CD8-positive, alpha-beta T cell (primary cell): ENCODE measurements at regions of chr21 and their contacts with region 1.

Region 1: GRCh38 chr21:44817506-44817880 is 369 bp downstream of the SUMO3 start:
- DNase-seq: peak; percentile 85 to 96 (median 91)
- ATAC-seq: peak; percentile 92
- H3K4me3 ChIP-seq: peak overlapping the region; percentile 46 to 58
- H3K4me3 Mint-ChIP-seq: peak overlapping the region; percentile 69
- H3K27ac ChIP-seq: peak overlapping the region in 1 of 2 experiments; percentile 76
- H3K27ac Mint-ChIP-seq: no peak overlapping the region
- H3K4me1 ChIP-seq: peaks cover 18% of the 10 kb centered on the region
- H3K4me1 Mint-ChIP-seq: peaks cover 9% of the 10 kb centered on the region
- H3K27me3 ChIP-seq: no peaks in the 10 kb centered on the region
- H3K27me3 Mint-ChIP-seq: no peaks in the 10 kb centered on the region
- CTCF ChIP-seq: no peak

Region 2: GRCh38 chr21:44011980-44012527 is 805.4 kb before region 1 on chr21 and contains the start of gene TRAPPC10:
- CTCF ChIA-PET with region 1: no interaction called
- POLR2A ChIA-PET with region 1: no interaction called
- intact Hi-C with region 1: loop called in 1 of 2 experiments (anchors 5 kb)
- DNase-seq: peak; percentile 48 to 91 (median 75)
- ATAC-seq: peak; percentile 53
- H3K4me3 ChIP-seq: peak within 1 kb of the TSS; percentile 63 to 79
- H3K4me3 Mint-ChIP-seq: peak within 1 kb of the TSS; percentile 87
- H3K27ac ChIP-seq: peak within 1 kb of the TSS; percentile 58 to 83
- H3K27ac Mint-ChIP-seq: peak within 1 kb of the TSS; percentile 94
- H3K4me1 ChIP-seq: peaks cover 40% of the 10 kb centered on the region
- H3K4me1 Mint-ChIP-seq: peaks cover 42% of the 10 kb centered on the region
- H3K27me3 ChIP-seq: no peaks in the 10 kb centered on the region
- H3K27me3 Mint-ChIP-seq: no peaks in the 10 kb centered on the region
- CTCF ChIP-seq: no peak
- total RNA-seq, gene TRAPPC10: 128 to 130 TPM

Region 3: DNA sequence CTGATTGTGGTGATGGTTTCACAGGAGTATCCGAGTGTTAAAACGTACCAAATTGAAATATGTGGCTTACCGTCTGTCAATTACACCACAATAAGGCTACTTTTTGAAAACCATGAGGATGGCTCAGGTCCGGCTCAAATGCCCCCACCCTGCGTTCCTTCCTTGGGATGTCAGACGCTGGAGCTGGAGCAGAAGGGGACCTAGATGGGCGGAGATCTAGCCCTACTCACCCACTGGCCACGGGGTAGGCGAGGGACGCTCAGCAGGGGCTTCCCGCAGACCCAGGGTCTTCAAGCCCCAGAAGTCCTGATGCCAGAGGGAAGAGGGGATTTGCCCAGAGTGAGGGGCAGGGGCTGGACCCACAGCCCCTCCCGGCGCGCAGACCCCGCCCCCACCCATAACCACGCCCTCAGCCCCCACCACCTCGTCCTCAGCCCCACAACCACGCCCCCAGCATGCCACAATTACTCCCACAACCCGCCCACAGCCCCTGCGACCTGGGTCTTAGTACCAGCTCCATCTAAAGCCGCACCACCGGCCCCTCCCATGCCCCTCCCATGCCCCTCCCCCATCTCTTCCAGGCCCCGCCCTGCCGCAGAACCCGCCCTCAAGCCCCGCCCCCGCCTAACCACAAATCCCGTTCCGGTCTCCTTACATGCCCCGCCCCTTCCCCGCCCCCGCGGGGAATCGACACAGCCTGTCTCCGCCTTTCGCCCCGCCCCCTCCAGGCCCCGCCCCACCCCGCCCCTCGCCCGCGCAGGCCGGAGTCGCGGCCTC is 362.6 kb before region 1 on chr21 and contains the start of gene LRRC3:
- CTCF ChIA-PET with region 1: no interaction called
- POLR2A ChIA-PET with region 1: no interaction called
- intact Hi-C with region 1: loop called in 1 of 2 experiments (anchors 1 kb)
- DNase-seq: peak; percentile 58 to 89 (median 76)
- ATAC-seq: peak; percentile 86
- H3K4me3 ChIP-seq: peak within 1 kb of the TSS; percentile 50 to 69
- H3K4me3 Mint-ChIP-seq: peak within 1 kb of the TSS; percentile 80
- H3K27ac ChIP-seq: no peak within 1 kb of the TSS
- H3K27ac Mint-ChIP-seq: no peak within 1 kb of the TSS
- H3K4me1 ChIP-seq: peaks cover 9% of the 10 kb centered on the region
- H3K4me1 Mint-ChIP-seq: peaks cover 5% of the 10 kb centered on the region
- H3K27me3 ChIP-seq: no peaks in the 10 kb centered on the region
- H3K27me3 Mint-ChIP-seq: peaks cover 5% of the 10 kb centered on the region
- CTCF ChIP-seq: no peak
- total RNA-seq, gene LRRC3: 0.39 to 0.68 TPM

Region 4: DNA sequence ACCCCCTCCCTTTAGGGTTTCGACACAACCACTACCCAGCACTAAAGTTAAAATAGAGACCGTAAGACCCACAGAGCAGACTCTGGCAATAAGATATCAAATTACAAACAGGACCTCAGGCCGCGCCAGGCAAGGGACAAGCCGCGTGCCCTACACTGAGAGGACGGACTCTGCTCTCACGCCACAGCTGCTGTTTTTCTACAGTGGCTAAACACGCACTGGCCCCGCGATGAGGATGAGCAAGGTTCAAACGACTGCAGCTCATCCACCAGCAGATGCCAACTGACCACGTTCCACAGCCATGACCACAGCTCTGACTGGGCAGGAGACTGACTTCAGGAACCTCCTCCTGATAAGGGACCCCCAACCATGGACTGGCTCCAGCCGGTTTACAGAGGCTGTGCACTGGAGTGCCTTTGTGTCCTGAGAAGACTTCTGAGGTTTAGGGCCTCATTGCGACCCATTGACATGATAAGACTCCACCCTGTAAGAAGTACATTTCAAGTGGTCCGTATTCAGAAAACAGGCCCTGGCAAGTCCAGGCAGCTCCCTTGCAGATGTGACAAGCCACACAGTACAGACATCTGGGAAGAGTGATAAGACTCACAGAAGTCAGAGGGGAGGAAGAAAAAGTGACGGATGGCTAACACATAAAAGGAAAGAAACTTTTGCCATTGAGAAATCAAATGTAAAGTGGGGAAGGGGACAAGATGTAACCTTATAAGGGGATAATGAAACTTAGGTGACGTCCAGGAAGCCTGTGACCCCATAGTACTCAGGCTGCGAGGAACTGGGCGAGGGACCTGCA is 223.7 kb before region 1 on chr21:
- CTCF ChIA-PET with region 1: no interaction called
- POLR2A ChIA-PET with region 1: no interaction called
- intact Hi-C with region 1: no loop called
- DNase-seq: peak in 1 of 9 experiments; percentile 43
- ATAC-seq: no peak
- H3K4me3 ChIP-seq: no peak overlapping the region
- H3K4me3 Mint-ChIP-seq: no peak overlapping the region
- H3K27ac ChIP-seq: no peak overlapping the region
- H3K27ac Mint-ChIP-seq: no peak overlapping the region
- H3K4me1 ChIP-seq: no peaks in the 10 kb centered on the region
- H3K4me1 Mint-ChIP-seq: peaks cover 5% of the 10 kb centered on the region
- H3K27me3 ChIP-seq: no peaks in the 10 kb centered on the region
- H3K27me3 Mint-ChIP-seq: peaks cover 3% of the 10 kb centered on the region
- CTCF ChIP-seq: no peak

Region 5: DNA sequence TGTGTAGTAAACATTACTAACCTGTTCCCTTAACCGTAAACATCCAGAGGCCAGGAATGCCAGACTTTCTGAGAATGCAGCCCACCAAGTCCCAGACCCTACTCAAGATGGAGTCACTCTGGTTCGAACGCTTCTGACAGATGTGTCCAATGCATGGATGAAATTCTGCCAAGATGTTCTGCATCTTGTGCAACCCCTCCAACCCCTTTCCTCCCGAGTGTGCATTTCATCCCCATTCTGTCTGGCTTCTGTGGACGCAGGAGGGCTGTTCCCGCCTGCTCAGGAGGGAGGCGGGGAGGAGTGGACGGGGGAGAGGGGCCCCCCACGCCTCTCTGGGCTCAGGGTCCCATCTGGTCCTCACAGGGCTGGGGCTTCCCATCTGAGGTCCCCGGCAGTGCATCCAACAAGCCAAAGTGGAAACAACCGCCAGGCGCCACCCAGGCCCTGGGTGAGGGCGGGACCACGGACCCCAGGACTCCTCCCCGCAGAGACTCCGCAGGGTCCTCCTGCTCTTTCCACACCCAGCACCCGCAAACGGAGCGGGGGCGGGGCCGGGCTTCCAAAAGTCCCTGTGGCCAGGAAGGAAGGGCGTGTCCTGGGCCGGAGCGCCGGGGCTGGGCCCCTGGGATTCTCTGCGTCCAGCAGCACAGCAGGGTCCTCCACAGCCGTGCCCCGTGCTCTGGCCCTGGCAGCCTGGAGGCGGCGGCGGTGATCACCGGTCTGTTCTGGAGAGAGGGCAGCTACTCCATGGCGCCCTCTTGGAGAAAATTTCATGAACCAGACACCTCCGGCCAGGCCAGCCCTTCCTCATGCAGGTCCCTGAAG is 28.1 kb after region 1 on chr21:
- CTCF ChIA-PET with region 1: no interaction called
- POLR2A ChIA-PET with region 1: no interaction called
- intact Hi-C with region 1: loop called (anchors 2 kb)
- DNase-seq: peak in 8 of 9 experiments; percentile 24 to 70 (median 47)
- ATAC-seq: peak; percentile 67
- H3K4me3 ChIP-seq: peak overlapping the region; percentile 37
- H3K4me3 Mint-ChIP-seq: peak overlapping the region; percentile 70
- H3K27ac ChIP-seq: no peak overlapping the region
- H3K27ac Mint-ChIP-seq: no peak overlapping the region
- H3K4me1 ChIP-seq: peaks cover 18% of the 10 kb centered on the region
- H3K4me1 Mint-ChIP-seq: peaks cover 13% of the 10 kb centered on the region
- H3K27me3 ChIP-seq: peaks cover 0 to 3% of the 10 kb centered on the region in 2 experiments
- H3K27me3 Mint-ChIP-seq: peaks cover 2% of the 10 kb centered on the region
- CTCF ChIP-seq: no peak

Region 6: DNA sequence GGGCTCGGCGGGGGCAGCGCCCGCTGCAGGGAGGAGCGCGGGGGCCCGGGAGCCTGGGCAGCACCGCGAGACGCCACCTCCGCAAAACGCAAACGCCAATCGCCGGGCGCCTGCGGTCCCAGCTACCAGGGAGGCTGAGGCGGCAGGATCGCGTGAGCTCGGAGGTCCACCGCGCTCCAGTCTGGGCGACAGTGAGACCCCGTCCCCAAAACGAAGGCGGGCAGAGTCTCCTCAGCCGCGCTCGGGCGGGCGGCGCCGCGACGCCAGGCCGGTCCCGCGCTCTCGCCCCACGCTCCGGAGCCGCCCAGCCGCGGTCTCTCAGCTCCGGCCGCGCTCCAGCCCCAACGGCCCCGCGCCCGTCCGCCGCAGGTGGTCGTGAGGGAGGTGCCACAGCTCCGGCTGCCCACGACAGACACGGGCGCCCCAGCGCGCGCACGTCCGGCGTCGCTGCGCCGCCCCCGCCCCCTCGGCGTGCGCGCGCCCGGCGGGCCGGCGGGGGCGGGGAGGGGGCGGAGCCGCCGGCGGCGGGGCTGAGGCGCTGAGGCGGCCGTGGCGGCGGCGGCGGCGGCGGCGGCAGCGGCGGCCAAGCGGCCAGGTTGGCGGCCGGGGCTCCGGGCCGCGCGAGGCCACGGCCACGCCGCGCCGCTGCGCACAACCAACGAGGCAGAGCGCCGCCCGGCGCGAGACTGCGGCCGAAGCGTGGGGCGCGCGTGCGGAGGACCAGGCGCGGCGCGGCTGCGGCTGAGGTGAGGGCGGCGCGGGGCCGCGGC is 256.7 kb after region 1 on chr21 and contains the start of gene ADARB1:
- CTCF ChIA-PET with region 1: no interaction called
- POLR2A ChIA-PET with region 1: interaction called, 5 read pairs
- intact Hi-C with region 1: loop called in 1 of 2 experiments (anchors 5 kb)
- DNase-seq: peak; percentile 24 to 87 (median 63)
- ATAC-seq: peak; percentile 55
- H3K4me3 ChIP-seq: peak within 1 kb of the TSS; percentile 58 to 69
- H3K4me3 Mint-ChIP-seq: peak within 1 kb of the TSS; percentile 95
- H3K27ac ChIP-seq: peak within 1 kb of the TSS; percentile 36 to 68
- H3K27ac Mint-ChIP-seq: peak within 1 kb of the TSS; percentile 92
- H3K4me1 ChIP-seq: peaks cover 38% of the 10 kb centered on the region
- H3K4me1 Mint-ChIP-seq: peaks cover 41% of the 10 kb centered on the region
- H3K27me3 ChIP-seq: no peaks in the 10 kb centered on the region
- H3K27me3 Mint-ChIP-seq: no peaks in the 10 kb centered on the region
- CTCF ChIP-seq: no peak
- total RNA-seq, gene ADARB1: 21.1 to 22.6 TPM

Region 7: DNA sequence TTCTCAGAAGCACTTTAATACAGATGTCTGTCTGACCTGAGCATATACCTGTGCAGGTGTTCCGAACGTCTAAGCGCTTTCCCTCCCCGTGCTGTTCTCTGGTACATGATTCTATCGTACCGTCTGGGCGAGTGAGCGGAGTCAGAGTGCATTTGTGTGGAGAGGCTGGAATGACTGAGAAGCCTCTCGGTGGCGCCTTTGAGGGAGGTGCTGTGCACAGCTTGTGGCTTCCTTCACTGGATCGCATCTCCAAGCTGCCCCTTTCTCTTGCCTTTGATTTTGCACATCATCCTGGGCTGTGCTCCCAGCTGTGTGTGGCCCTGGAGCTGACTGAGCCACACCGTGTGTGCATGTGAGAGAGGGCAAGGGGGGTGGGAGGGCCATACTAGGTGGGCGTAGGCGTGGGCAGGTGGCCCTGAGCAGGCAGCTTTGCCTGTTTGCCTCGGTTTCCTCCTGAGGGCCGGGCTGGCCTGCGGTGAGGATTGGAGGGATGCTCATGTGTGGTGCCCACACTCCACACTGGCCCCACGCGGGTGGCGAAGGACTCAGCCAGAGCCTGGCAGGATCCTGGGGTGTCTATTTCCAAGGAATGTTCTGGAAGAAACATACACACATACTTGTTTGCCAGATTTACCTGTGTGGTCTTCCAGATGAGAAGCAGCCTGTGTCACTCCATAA is 362.2 kb after region 1 on chr21:
- CTCF ChIA-PET with region 1: no interaction called
- POLR2A ChIA-PET with region 1: no interaction called
- intact Hi-C with region 1: no loop called
- DNase-seq: peak in 1 of 9 experiments; percentile 42
- ATAC-seq: no peak
- H3K4me3 ChIP-seq: no peak overlapping the region
- H3K4me3 Mint-ChIP-seq: no peak overlapping the region
- H3K27ac ChIP-seq: no peak overlapping the region
- H3K27ac Mint-ChIP-seq: no peak overlapping the region
- H3K4me1 ChIP-seq: no peaks in the 10 kb centered on the region
- H3K4me1 Mint-ChIP-seq: no peaks in the 10 kb centered on the region
- H3K27me3 ChIP-seq: no peaks in the 10 kb centered on the region
- H3K27me3 Mint-ChIP-seq: no peaks in the 10 kb centered on the region
- CTCF ChIP-seq: no peak

Region 8: DNA sequence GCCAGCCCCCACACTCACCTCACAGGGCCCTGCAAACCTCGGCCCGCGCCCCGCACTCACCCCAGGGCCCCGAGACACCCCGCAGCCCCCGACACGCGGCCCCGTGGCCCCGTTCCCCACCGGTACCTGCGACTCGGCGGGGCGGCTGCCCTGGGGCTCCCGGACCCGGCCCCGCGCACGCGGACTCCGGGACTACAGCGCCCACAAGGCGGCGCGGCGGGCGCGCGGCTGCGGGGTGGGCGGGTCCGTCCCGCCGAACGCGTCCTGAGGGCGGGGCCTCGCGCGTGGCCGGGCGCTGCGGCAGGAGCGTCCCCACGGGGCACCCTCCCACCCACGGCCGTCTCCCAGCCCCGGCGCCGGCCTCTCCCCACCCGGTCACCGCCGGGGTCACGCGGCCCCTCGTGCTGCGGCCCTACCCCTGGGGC is 724.8 kb after region 1 on chr21 and contains the start of gene SLC19A1:
- CTCF ChIA-PET with region 1: no interaction called
- POLR2A ChIA-PET with region 1: no interaction called
- intact Hi-C with region 1: loop called in 1 of 2 experiments (anchors 5 kb)
- DNase-seq: peak; percentile 42 to 87 (median 67)
- ATAC-seq: peak; percentile 86
- H3K4me3 ChIP-seq: peak within 1 kb of the TSS; percentile 45 to 57
- H3K4me3 Mint-ChIP-seq: peak within 1 kb of the TSS; percentile 72
- H3K27ac ChIP-seq: peak within 1 kb of the TSS; percentile 30 to 54
- H3K27ac Mint-ChIP-seq: no peak within 1 kb of the TSS
- H3K4me1 ChIP-seq: peaks cover 17% of the 10 kb centered on the region
- H3K4me1 Mint-ChIP-seq: peaks cover 14% of the 10 kb centered on the region
- H3K27me3 ChIP-seq: no peaks in the 10 kb centered on the region
- H3K27me3 Mint-ChIP-seq: no peaks in the 10 kb centered on the region
- CTCF ChIP-seq: peak; percentile 40
- total RNA-seq, gene SLC19A1: 8.8 to 9.0 TPM